B cell (primary cell): ENCODE measurements at regions of chr1 and their contacts with region 1.

Region 1: GRCh38 chr1:113835642-113836307 is 23.5 kb upstream of the RSBN1 start:
- DNase-seq: peak; percentile 72
- ATAC-seq: peak; percentile 28
- H3K4me3 ChIP-seq: no peak overlapping the region
- H3K4me3 Mint-ChIP-seq: no peak overlapping the region
- H3K27ac ChIP-seq: no peak overlapping the region
- H3K27ac Mint-ChIP-seq: no peak overlapping the region
- H3K4me1 ChIP-seq: no peaks in the 10 kb centered on the region
- H3K4me1 Mint-ChIP-seq: peaks cover 2% of the 10 kb centered on the region
- H3K27me3 ChIP-seq: no peaks in the 10 kb centered on the region
- H3K27me3 Mint-ChIP-seq: no peaks in the 10 kb centered on the region
- CTCF ChIP-seq: peak; percentile 86

Region 2: GRCh38 chr1:113859478-113860175 is 23.9 kb after region 1 on chr1:
- CTCF ChIA-PET with region 1: interaction called, 36 read pairs
- POLR2A ChIA-PET with region 1: interaction called, 5 read pairs
- intact Hi-C with region 1: loop called (anchors 2 kb)
- DNase-seq: peak; percentile 79
- ATAC-seq: peak; percentile 80
- H3K4me3 ChIP-seq: peak overlapping the region; percentile 5 to 58 (median 31)
- H3K4me3 Mint-ChIP-seq: peak overlapping the region; percentile 72
- H3K27ac ChIP-seq: peak overlapping the region; percentile 73 to 80
- H3K27ac Mint-ChIP-seq: peak overlapping the region; percentile 92
- H3K4me1 ChIP-seq: peaks cover 58 to 60% of the 10 kb centered on the region in 2 donors
- H3K4me1 Mint-ChIP-seq: peaks cover 58% of the 10 kb centered on the region
- H3K27me3 ChIP-seq: no peaks in the 10 kb centered on the region
- H3K27me3 Mint-ChIP-seq: no peaks in the 10 kb centered on the region
- CTCF ChIP-seq: no peak

Region 3: GRCh38 chr1:113898241-113898814 is 62.6 kb after region 1 on chr1:
- CTCF ChIA-PET with region 1: interaction called, 80 read pairs
- POLR2A ChIA-PET with region 1: no interaction called
- intact Hi-C with region 1: no loop called
- DNase-seq: no peak
- ATAC-seq: no peak
- H3K4me3 ChIP-seq: no peak overlapping the region
- H3K4me3 Mint-ChIP-seq: no peak overlapping the region
- H3K27ac ChIP-seq: no peak overlapping the region
- H3K27ac Mint-ChIP-seq: no peak overlapping the region
- H3K4me1 ChIP-seq: peaks cover 16 to 18% of the 10 kb centered on the region in 2 donors
- H3K4me1 Mint-ChIP-seq: peaks cover 25% of the 10 kb centered on the region
- H3K27me3 ChIP-seq: no peaks in the 10 kb centered on the region
- H3K27me3 Mint-ChIP-seq: no peaks in the 10 kb centered on the region
- CTCF ChIP-seq: no peak

Region 4: GRCh38 chr1:113928941-113929749 is 93.4 kb after region 1 on chr1 and contains the start of gene HIPK1:
- CTCF ChIA-PET with region 1: interaction called, 41 read pairs
- POLR2A ChIA-PET with region 1: no interaction called
- intact Hi-C with region 1: loop called (anchors 1 kb)
- DNase-seq: peak; percentile 96
- ATAC-seq: peak; percentile 75
- H3K4me3 ChIP-seq: peak within 1 kb of the TSS; percentile 76 to 92 (median 86)
- H3K4me3 Mint-ChIP-seq: peak within 1 kb of the TSS; percentile 100
- H3K27ac ChIP-seq: peak within 1 kb of the TSS; percentile 98 to 99
- H3K27ac Mint-ChIP-seq: peak within 1 kb of the TSS; percentile 100
- H3K4me1 ChIP-seq: peaks cover 33 to 35% of the 10 kb centered on the region in 2 donors
- H3K4me1 Mint-ChIP-seq: peaks cover 49% of the 10 kb centered on the region
- H3K27me3 ChIP-seq: no peaks in the 10 kb centered on the region
- H3K27me3 Mint-ChIP-seq: no peaks in the 10 kb centered on the region
- CTCF ChIP-seq: no peak
- total RNA-seq, gene HIPK1: 48.0 and 48.2 TPM in 2 replicates

Region 5: DNA sequence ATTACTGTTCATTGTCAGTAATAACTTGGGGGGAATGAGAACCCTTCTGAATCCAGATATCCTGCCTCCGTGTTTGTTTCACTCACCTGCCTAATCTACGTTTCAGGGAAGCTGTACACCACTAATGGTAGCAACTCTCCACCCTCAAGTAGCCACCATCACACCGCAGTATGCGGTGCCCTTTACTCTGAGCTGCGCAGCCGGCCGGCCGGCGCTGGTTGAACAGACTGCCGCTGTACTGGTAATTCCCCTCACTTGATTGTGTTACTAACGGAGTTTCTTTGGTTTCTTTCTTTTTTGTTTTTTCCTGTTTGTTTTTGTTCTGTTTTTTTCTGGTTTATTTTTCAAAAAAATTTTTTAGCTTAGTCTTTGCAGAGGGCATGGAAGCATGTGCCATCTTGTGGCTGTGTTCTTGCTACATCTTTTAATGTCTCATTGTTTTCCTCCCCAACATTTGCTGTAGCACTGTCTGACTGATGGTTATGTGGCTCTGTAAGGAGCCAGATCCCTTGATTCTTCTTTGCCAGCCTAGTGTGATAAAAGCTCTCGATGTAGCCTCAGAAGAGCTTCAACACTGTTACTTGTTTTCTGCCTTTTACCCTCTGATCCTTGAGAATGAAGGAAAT is 127.6 kb after region 1 on chr1:
- CTCF ChIA-PET with region 1: interaction called, 17 read pairs
- POLR2A ChIA-PET with region 1: no interaction called
- intact Hi-C with region 1: no loop called
- DNase-seq: no peak
- ATAC-seq: no peak
- H3K4me3 ChIP-seq: no peak overlapping the region
- H3K4me3 Mint-ChIP-seq: no peak overlapping the region
- H3K27ac ChIP-seq: no peak overlapping the region
- H3K27ac Mint-ChIP-seq: no peak overlapping the region
- H3K4me1 ChIP-seq: no peaks in the 10 kb centered on the region
- H3K4me1 Mint-ChIP-seq: no peaks in the 10 kb centered on the region
- H3K27me3 ChIP-seq: no peaks in the 10 kb centered on the region
- H3K27me3 Mint-ChIP-seq: no peaks in the 10 kb centered on the region
- CTCF ChIP-seq: no peak

Region 6: DNA sequence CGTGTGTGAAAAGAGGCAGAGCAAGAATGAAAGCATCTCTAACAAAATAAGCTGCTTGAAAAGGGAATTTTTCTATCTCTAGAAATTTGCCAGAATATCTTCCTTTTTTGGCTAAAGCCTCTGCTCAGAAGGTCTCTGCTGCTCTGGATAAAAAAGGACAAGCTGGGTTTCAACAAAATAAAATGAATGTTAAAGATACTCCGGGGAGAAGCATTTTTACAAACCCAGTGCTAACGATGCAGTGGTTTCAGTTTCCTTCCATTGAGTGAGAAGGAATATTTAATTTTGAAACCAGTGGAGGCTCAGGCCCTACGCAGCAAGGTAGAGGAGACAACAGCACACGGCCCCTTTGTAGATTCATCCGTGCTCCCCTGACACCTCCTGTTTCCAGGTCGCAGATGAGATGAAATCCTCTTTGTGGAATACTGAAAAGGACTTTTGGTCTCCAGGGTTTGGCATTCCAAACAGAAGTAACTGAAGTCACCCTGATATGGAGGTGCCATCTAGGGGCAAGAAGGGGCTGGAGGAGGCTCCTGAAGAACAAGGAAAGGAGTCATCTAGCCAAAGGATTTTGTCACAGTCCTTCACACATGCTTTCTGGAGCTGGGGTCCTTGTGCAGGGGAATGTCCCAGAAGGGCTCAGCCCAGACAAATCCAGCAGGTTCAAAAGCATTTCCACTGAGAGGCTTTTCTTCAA is 383.5 kb after region 1 on chr1:
- CTCF ChIA-PET with region 1: no interaction called
- POLR2A ChIA-PET with region 1: no interaction called
- intact Hi-C with region 1: no loop called
- DNase-seq: no peak
- ATAC-seq: no peak
- H3K4me3 ChIP-seq: no peak overlapping the region
- H3K4me3 Mint-ChIP-seq: no peak overlapping the region
- H3K27ac ChIP-seq: no peak overlapping the region
- H3K27ac Mint-ChIP-seq: no peak overlapping the region
- H3K4me1 ChIP-seq: no peaks in the 10 kb centered on the region
- H3K4me1 Mint-ChIP-seq: peaks cover 2% of the 10 kb centered on the region
- H3K27me3 ChIP-seq: no peaks in the 10 kb centered on the region
- H3K27me3 Mint-ChIP-seq: peaks cover 20% of the 10 kb centered on the region
- CTCF ChIP-seq: no peak

Region 7: DNA sequence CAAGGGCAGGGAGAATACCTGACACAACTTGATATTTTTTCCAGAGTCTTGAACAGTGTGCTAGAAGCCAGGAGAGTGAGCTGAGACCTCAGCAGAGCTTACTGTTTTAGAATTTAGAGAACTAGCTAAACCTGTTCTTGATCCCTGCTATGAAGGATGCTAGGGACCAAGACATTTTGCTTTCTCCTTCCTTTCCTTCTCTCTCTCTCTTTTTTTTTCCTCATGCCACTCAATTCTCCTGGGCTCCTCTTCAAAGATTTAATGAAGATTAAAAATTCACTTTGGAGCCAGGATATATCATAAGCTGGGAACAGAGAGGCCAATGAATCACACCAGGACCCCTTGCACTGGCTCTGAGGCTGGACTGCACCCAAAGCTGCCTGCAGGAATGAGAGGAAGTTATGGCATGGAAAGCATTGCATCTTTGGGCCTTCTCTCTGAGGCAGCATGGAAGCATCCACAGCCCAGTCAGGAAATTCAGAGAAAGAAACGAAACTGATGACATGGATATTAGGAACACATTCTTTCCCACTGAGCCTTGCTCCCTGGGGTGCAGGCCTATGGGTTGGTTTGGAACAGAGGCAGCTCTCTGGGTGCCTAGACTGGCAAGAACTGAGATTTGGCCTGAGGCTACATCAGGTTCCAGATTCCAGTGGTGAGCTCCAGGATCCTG is 1403.5 kb after region 1 on chr1:
- CTCF ChIA-PET with region 1: no interaction called
- POLR2A ChIA-PET with region 1: no interaction called
- intact Hi-C with region 1: no loop called
- DNase-seq: no peak
- ATAC-seq: no peak
- H3K4me3 ChIP-seq: no peak overlapping the region
- H3K4me3 Mint-ChIP-seq: no peak overlapping the region
- H3K27ac ChIP-seq: no peak overlapping the region
- H3K27ac Mint-ChIP-seq: no peak overlapping the region
- H3K4me1 ChIP-seq: no peaks in the 10 kb centered on the region
- H3K4me1 Mint-ChIP-seq: no peaks in the 10 kb centered on the region
- H3K27me3 ChIP-seq: peaks cover 0 to 2% (median 0%) of the 10 kb centered on the region in 4 experiments
- H3K27me3 Mint-ChIP-seq: peaks cover 7% of the 10 kb centered on the region
- CTCF ChIP-seq: no peak